CD14-positive monocyte (primary cell): ENCODE measurements at regions of chr16 and their contacts with region 1.

Region 1: DNA sequence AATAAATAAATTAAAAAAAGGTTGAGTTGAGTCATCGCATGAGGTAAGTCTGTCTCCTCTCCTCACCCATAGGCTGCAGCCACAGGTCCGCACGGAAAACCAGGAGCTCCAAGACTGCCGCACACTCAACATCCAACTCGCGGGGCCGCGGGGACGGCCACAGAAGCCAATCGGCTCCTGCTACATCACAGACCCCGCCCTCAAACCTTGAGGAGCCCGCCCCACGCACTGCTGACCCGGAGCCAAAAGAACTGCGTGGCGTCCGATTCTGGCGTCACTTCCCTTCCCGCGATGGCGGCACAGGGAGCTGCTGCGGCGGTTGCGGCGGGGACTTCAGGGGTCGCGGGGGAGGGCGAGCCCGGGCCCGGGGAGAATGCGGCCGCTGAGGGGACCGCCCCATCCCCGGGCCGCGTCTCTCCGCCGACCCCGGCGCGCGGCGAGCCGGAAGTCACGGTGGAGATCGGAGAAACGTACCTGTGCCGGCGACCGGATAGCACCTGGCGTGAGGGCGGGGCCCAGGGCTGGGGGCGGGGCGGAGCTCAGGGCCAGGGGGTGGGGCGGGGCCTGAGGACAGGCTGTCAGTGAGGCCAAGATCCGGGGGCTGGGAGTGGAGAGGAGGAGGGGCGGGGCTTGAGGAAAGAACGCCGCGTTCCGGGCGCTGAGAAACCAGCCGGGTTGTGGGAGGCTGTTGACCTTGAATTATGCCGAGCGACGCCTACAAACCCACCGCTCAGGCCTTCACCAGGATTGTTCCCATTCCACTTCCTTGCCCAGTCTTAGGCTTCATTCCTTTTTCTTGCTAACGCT is at the start of gene KAT8:
- DNase-seq: peak; percentile 96 to 99 (median 97)
- H3K4me3 ChIP-seq: peak within 1 kb of the TSS; percentile 61 to 91 (median 79)
- H3K4me3 Mint-ChIP-seq: peak within 1 kb of the TSS; percentile 91
- H3K27ac ChIP-seq: peak within 1 kb of the TSS; percentile 97 to 99
- H3K27ac Mint-ChIP-seq: peak within 1 kb of the TSS; percentile 97 to 100 (median 100)
- H3K4me1 ChIP-seq: peaks cover 55 to 67% of the 10 kb centered on the region in 2 donors
- H3K4me1 Mint-ChIP-seq: peaks cover 54% of the 10 kb centered on the region
- H3K27me3 ChIP-seq: no peaks in the 10 kb centered on the region
- H3K27me3 Mint-ChIP-seq: peaks cover 0 to 2% (median 0%) of the 10 kb centered on the region in 3 donors
- CTCF ChIP-seq: no peak
- polyA plus RNA-seq, gene KAT8: 34.5 to 136 (median 42.0) TPM

Region 2: GRCh38 chr16:30957456-30958174 is 160.0 kb before region 1 on chr16 and contains the start of gene SETD1A:
- intact Hi-C with region 1: no loop called
- DNase-seq: peak; percentile 93 to 97 (median 96)
- H3K4me3 ChIP-seq: peak within 1 kb of the TSS; percentile 66 to 95 (median 71)
- H3K4me3 Mint-ChIP-seq: peak within 1 kb of the TSS; percentile 90 to 95
- H3K27ac ChIP-seq: peak within 1 kb of the TSS; percentile 88 to 97
- H3K27ac Mint-ChIP-seq: peak within 1 kb of the TSS; percentile 96 to 99 (median 99)
- H3K4me1 ChIP-seq: peaks cover 13 to 21% of the 10 kb centered on the region in 2 donors
- H3K4me1 Mint-ChIP-seq: peaks cover 17% of the 10 kb centered on the region
- H3K27me3 ChIP-seq: no peaks in the 10 kb centered on the region
- H3K27me3 Mint-ChIP-seq: peaks cover 0 to 1% (median 0%) of the 10 kb centered on the region in 3 donors
- CTCF ChIP-seq: no peak
- polyA plus RNA-seq, gene SETD1A: 0.16 to 6.6 (median 1.3) TPM

Region 3: GRCh38 chr16:31142109-31143010 is 24.8 kb after region 1 on chr16:
- intact Hi-C with region 1: loop called in 1 of 2 experiments (anchors 1 kb)
- DNase-seq: peak; percentile 91 to 96 (median 94)
- H3K4me3 ChIP-seq: peak overlapping the region; percentile 7 to 70 (median 28)
- H3K4me3 Mint-ChIP-seq: peak overlapping the region; percentile 73 to 85
- H3K27ac ChIP-seq: peak overlapping the region; percentile 72 to 78
- H3K27ac Mint-ChIP-seq: peak overlapping the region; percentile 85 to 95 (median 93)
- H3K4me1 ChIP-seq: peaks cover 35 to 47% of the 10 kb centered on the region in 2 donors
- H3K4me1 Mint-ChIP-seq: peaks cover 36% of the 10 kb centered on the region
- H3K27me3 ChIP-seq: no peaks in the 10 kb centered on the region
- H3K27me3 Mint-ChIP-seq: peaks cover 0 to 4% (median 2%) of the 10 kb centered on the region in 3 donors
- CTCF ChIP-seq: peak; percentile 90

Region 4: DNA sequence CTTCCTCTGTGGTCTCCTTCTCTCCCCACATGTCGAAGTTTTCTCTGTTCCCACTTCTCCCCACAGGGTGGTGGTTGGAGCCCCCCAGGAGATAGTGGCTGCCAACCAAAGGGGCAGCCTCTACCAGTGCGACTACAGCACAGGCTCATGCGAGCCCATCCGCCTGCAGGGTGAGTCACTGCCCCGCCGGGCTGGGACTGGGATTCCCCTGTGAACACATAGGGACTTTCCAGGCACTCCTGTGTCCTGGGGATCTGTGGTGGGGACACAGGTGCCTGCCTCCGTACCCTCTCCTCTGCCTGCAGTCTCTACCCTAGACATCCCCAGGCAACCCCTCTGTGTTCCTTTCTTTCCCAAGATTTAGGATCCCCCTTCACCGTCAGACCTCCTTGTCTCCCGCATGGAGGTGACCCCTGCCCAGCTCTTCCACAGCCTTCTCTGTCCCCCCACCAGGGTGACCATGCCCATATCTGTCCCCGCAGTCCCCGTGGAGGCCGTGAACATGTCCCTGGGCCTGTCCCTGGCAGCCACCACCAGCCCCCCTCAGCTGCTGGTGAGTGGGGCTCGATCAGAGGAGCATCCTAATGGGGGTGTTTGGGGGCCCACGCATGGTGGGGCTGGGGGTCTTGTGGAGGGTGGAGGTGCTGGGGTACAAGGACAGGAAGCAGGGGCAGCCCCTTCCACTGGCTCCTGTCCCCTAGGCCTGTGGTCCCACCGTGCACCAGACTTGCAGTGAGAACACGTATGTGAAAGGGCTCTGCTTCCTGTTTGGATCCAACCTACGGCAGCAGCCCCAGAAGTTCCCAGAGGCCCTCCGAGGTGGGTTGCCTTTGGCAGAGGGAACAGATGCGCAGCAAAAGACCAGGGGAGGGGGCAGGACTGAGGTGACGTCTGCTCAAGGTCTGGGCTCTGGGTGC is 148.0 kb after region 1 on chr16:
- intact Hi-C with region 1: loop called in 1 of 2 experiments (anchors 10 kb)
- DNase-seq: peak; percentile 78 to 90 (median 81)
- H3K4me3 ChIP-seq: no peak overlapping the region
- H3K4me3 Mint-ChIP-seq: peak overlapping the region; percentile 37 to 81
- H3K27ac ChIP-seq: peak overlapping the region in 1 of 2 donors; percentile 75
- H3K27ac Mint-ChIP-seq: peak overlapping the region; percentile 67 to 89 (median 79)
- H3K4me1 ChIP-seq: peaks cover 49 to 59% of the 10 kb centered on the region in 2 donors
- H3K4me1 Mint-ChIP-seq: peaks cover 55% of the 10 kb centered on the region
- H3K27me3 ChIP-seq: no peaks in the 10 kb centered on the region
- H3K27me3 Mint-ChIP-seq: peaks cover 0 to 8% (median 2%) of the 10 kb centered on the region in 3 donors
- CTCF ChIP-seq: no peak

Region 5: GRCh38 chr16:31458844-31459721 is 341.5 kb after region 1 on chr16 and contains the start of gene ARMC5:
- intact Hi-C with region 1: loop called in 1 of 2 experiments (anchors 5 kb)
- DNase-seq: peak; percentile 99
- H3K4me3 ChIP-seq: peak within 1 kb of the TSS; percentile 54 to 86 (median 86)
- H3K4me3 Mint-ChIP-seq: peak within 1 kb of the TSS; percentile 86 to 92
- H3K27ac ChIP-seq: peak within 1 kb of the TSS; percentile 95 to 96
- H3K27ac Mint-ChIP-seq: peak within 1 kb of the TSS; percentile 94 to 97 (median 95)
- H3K4me1 ChIP-seq: peaks cover 56 to 60% of the 10 kb centered on the region in 2 donors
- H3K4me1 Mint-ChIP-seq: peaks cover 53% of the 10 kb centered on the region
- H3K27me3 ChIP-seq: no peaks in the 10 kb centered on the region
- H3K27me3 Mint-ChIP-seq: peaks cover 0 to 6% (median 0%) of the 10 kb centered on the region in 3 donors
- CTCF ChIP-seq: peak; percentile 68
- polyA plus RNA-seq, gene ARMC5: 2.9 to 9.3 (median 4.2) TPM